ENCODE measurements at regions of chr17 and their contacts with region 1.

Region 1: DNA sequence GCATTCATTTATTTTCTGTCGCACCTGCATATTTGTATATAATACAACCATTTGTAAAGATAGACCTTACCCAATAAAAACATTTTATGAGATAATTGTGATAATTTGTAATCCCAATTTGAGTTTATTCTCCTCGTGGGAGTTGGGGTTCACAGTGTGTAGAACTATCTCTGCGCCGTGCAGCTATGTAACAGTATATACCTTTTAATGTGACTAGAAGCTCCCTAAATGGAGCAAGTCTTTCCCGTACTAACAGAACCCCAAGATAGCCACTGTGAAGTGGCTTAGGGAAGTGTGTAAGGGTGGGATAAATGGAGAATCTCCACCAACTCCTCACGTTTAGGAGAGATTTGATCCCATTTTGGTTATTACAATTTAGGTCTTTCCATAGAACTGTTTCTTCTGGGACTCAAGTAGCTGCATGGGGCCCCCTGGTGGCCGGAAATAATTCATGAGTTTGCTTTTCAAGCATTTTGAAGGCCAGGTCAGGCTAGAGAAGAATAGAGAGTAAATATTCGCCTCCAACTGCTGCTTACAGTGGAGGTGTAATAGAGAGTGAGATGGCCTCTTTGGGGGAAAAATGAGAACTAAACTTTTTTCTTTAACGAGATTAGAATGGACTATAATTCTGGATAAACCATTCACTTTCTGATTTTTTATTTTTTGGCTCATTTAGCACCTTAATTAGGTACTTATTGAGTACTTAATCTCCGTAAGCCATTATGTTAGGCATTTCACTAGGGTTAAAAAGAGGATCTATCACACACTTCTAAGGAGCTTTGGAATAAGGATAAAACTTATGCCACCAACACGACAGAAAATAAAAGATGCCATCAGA is 4.5 kb downstream of the TMEM100 start:
- DNase-seq: peak; percentile 51 to 78
- ATAC-seq: peak; percentile 58 to 64
- H3K4me3 ChIP-seq: no peak overlapping the region
- H3K27ac ChIP-seq: no peak overlapping the region
- H3K4me1 ChIP-seq: peaks cover 5 to 7% of the 10 kb centered on the region in 2 donors
- H3K27me3 ChIP-seq: no peaks in the 10 kb centered on the region
- CTCF ChIP-seq: peak; percentile 52 to 91 (median 81)
- POLR2A ChIP-seq: no peak

Region 2: DNA sequence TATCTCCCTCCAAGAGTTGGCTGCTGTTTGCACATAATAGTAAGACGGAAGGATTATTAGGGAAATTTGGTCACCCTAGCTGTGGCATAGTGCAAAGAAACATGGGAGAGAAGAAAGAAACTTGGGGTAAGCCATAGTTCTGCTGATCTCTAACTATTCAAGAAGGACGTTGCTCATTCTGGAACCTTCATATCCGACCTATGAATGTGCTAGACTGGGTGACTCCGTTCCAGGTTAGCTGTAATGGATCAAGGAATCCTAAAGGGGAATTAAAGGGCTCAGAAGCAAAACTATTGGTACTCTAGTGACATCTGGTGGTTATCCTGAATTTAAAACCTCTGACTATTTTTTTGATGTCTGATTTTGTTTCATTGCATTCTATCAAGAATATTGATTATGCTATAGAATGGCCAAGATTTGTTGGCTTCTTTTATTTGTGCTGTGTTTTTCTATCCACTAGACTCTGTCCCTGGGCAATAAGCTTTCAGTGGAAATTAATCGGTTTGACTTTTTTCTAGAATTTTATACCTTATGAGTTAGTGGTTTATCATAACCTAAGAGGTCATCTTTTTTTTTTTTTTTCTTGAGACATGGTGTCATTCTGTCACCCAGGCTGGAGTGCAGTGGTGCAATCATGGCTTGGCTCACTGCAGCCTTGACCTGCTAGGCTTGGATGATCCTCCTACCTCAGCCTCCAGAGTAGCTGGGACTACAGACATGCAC is 52.2 kb after region 1 on chr17:
- in situ Hi-C with region 1: loop called in 2 of 4 experiments (anchors 5 to 10 kb)
- intact Hi-C with region 1: loop called (anchors 2 kb)
- DNase-seq: no peak
- ATAC-seq: peak; percentile 70 to 83
- H3K4me3 ChIP-seq: no peak overlapping the region
- H3K27ac ChIP-seq: peak overlapping the region; percentile 20 to 48 (median 38)
- H3K4me1 ChIP-seq: peaks cover 10 to 13% of the 10 kb centered on the region in 2 donors
- H3K27me3 ChIP-seq: no peaks in the 10 kb centered on the region
- CTCF ChIP-seq: peak; percentile 69 to 75 (median 72)
- POLR2A ChIP-seq: no peak

Region 3: GRCh38 chr17:55825213-55825612 is 107.1 kb after region 1 on chr17:
- in situ Hi-C with region 1: no loop called
- intact Hi-C with region 1: loop called (anchors 5 kb)
- DNase-seq: no peak
- ATAC-seq: peak in 1 of 2 donors; percentile 66
- H3K4me3 ChIP-seq: no peak overlapping the region
- H3K27ac ChIP-seq: no peak overlapping the region
- H3K4me1 ChIP-seq: no peaks in the 10 kb centered on the region
- H3K27me3 ChIP-seq: no peaks in the 10 kb centered on the region
- CTCF ChIP-seq: peak in 4 of 5 experiments; percentile 16 to 61 (median 47)
- POLR2A ChIP-seq: no peak